ENCODE measurements at regions of chrX and their contacts with region 1.

Region 1: DNA sequence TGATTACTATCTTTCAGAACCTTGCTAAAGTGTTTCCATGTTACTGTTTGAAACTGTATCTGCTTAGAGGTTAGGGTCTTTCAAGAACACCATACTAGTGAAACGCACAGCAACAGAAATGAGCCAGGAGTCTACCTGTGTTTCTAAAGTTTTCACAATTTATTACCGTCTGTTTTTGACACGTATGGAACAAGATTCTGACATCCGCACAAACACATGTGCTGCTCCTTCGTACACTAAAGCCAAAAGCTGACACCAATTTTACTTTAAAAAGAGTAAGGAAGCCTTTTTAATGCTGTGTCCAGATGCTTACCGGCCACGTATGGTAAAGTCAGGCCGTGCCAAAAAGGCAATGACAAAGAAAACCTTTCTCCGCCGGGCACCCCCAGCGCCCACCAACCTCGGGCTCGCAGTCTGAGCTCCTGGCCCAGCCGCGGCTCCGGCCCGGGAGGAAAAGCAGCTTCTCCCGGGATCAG is 532 bp downstream of the RPS4X start:
- DNase-seq: no peak
- ATAC-seq: peak; percentile 10 to 38
- H3K4me3 ChIP-seq: peak overlapping the region; percentile 65 to 74 (median 74)
- H3K27ac ChIP-seq: peak overlapping the region; percentile 81 to 89 (median 83)
- H3K4me1 ChIP-seq: peaks cover 6 to 8% of the 10 kb centered on the region in 2 donors
- H3K27me3 ChIP-seq: no peaks in the 10 kb centered on the region
- CTCF ChIP-seq: no peak
- POLR2A ChIP-seq: no peak

Region 2: GRCh38 chrX:72181178-72182125 is 95.1 kb before region 1 on chrX and contains the start of gene PIN4:
- in situ Hi-C with region 1: no loop called
- intact Hi-C with region 1: loop called (anchors 2 kb)
- DNase-seq: peak; percentile 83 to 93
- ATAC-seq: peak; percentile 99 to 100
- H3K4me3 ChIP-seq: peak within 1 kb of the TSS; percentile 74 to 85 (median 79)
- H3K27ac ChIP-seq: peak within 1 kb of the TSS; percentile 65 to 92 (median 82)
- H3K4me1 ChIP-seq: peaks cover 12 to 16% of the 10 kb centered on the region in 2 donors
- H3K27me3 ChIP-seq: no peaks in the 10 kb centered on the region
- CTCF ChIP-seq: no peak
- POLR2A ChIP-seq: peak; percentile 33 to 58
- total RNA-seq, gene PIN4: 4.7 to 11.2 (median 8.5) TPM

Region 3: GRCh38 chrX:72238721-72239475 is 37.6 kb before region 1 on chrX and contains the start of gene ERCC6L:
- in situ Hi-C with region 1: no loop called
- intact Hi-C with region 1: loop called (anchors 1 kb)
- DNase-seq: peak; percentile 60 to 78
- ATAC-seq: peak; percentile 89 to 94
- H3K4me3 ChIP-seq: peak within 1 kb of the TSS; percentile 39 to 53 (median 44)
- H3K27ac ChIP-seq: peak within 1 kb of the TSS in 3 of 4 donors; percentile 50 to 55 (median 53)
- H3K4me1 ChIP-seq: no peaks in the 10 kb centered on the region
- H3K27me3 ChIP-seq: no peaks in the 10 kb centered on the region
- CTCF ChIP-seq: no peak
- POLR2A ChIP-seq: no peak
- total RNA-seq, gene ERCC6L: 0.07 TPM in 1 of 4 donors, not detected in the others

Region 4: DNA sequence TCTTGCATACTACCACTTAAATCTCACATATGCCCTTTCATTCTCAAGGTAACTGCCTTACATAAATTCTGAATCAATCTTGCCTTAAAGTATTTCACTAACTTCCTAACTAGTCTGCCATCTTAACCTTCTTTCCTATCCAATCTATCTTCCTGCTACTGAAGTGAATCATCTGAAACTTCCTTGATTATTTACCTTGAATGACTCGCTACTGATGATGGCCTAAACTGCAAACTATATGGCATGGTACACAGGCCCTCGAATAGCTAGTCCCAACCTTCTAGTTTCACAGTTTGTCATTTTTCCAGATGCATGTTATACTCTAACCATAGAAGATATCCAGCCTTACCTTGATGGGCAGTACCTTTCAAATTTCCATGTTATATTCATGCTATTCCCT is 417.7 kb after region 1 on chrX:
- in situ Hi-C with region 1: no loop called
- intact Hi-C with region 1: no loop called
- DNase-seq: no peak
- ATAC-seq: no peak
- H3K4me3 ChIP-seq: no peak overlapping the region
- H3K27ac ChIP-seq: peak overlapping the region; percentile 48 to 79 (median 63)
- H3K4me1 ChIP-seq: peaks cover 3 to 14% of the 10 kb centered on the region in 2 donors
- H3K27me3 ChIP-seq: no peaks in the 10 kb centered on the region
- CTCF ChIP-seq: no peak
- POLR2A ChIP-seq: no peak

Region 5: DNA sequence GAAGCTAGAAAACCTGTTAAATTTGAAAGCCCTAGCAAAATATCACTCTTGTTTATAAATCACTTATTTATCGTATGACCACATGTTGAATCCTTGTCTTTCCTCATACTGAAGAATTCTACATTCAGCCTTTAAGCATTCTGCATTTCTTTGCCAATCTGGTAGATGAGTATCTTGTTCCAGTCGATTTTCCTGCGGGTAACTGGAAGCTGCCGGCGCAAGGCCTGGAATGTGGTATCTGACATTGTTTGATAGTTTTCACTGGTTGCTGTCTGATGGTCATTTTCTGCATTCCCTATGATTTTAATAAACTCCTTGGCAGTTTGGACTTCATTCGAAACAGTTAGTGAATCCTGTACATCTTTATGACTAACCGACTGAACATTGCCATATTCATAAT is 451.3 kb after region 1 on chrX:
- in situ Hi-C with region 1: no loop called
- intact Hi-C with region 1: no loop called
- DNase-seq: no peak
- ATAC-seq: no peak
- H3K4me3 ChIP-seq: no peak overlapping the region
- H3K27ac ChIP-seq: no peak overlapping the region
- H3K4me1 ChIP-seq: no peaks in the 10 kb centered on the region
- H3K27me3 ChIP-seq: peaks cover 0 to 6% (median 0%) of the 10 kb centered on the region in 3 donors
- CTCF ChIP-seq: no peak
- POLR2A ChIP-seq: no peak